ENCODE measurements at regions of chr12 and their contacts with region 1.

Region 1: DNA sequence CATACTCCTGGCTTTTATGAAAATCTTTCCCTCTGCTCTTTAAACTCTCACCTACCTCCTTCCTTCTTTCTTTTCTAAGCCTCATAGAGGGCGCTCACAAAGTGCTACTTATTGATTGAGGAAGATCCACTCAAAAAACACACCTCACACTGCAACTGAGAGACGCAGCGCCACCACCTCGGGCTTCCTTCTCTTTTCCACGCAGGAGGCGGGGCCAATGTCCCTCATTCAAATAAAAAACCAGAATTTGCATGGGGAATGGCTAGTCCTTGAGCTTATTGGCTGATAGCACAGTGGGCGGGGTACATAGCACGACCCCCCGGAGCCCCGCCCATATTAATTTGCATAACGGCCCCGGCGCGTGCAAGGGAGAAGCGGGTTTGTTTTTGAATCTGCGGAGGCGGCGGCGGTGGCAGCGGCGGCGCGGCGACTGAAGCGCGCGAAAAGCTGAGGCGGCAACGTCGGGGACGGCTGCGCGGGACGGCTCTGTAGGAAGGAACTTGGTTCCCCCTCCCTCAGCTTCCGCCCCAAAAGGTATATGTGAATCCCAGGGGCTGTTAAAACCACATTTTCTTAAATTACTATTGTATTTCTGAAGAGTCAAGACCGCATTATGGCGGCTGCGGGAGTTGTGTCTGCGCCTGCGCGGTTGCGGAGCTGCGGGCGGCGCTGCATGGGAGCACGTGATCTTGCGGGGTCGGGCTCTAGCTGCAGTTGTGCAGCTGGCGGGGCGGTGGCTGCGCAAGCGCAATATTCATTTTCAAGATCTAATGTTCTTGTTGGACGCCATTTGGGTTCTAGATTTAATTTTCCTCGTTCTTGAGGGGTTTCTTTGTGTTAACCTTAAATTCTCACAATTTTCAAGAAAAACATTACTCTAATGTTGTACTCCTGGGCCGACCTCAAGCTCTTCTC is at the start of gene ATF7IP:
- DNase-seq: peak; percentile 97
- H3K4me3 Mint-ChIP-seq: peak within 1 kb of the TSS; percentile 81
- H3K27ac Mint-ChIP-seq: peak within 1 kb of the TSS; percentile 100
- H3K4me1 Mint-ChIP-seq: peaks cover 34% of the 10 kb centered on the region
- H3K27me3 Mint-ChIP-seq: no peaks in the 10 kb centered on the region

Region 2: GRCh38 chr12:14257734-14258574 is 107.6 kb before region 1 on chr12:
- CTCF ChIA-PET with region 1: interaction called, 25 read pairs
- DNase-seq: peak; percentile 90
- H3K4me3 Mint-ChIP-seq: peak overlapping the region; percentile 64
- H3K27ac Mint-ChIP-seq: peak overlapping the region; percentile 99
- H3K4me1 Mint-ChIP-seq: peaks cover 51% of the 10 kb centered on the region
- H3K27me3 Mint-ChIP-seq: no peaks in the 10 kb centered on the region

Region 3: DNA sequence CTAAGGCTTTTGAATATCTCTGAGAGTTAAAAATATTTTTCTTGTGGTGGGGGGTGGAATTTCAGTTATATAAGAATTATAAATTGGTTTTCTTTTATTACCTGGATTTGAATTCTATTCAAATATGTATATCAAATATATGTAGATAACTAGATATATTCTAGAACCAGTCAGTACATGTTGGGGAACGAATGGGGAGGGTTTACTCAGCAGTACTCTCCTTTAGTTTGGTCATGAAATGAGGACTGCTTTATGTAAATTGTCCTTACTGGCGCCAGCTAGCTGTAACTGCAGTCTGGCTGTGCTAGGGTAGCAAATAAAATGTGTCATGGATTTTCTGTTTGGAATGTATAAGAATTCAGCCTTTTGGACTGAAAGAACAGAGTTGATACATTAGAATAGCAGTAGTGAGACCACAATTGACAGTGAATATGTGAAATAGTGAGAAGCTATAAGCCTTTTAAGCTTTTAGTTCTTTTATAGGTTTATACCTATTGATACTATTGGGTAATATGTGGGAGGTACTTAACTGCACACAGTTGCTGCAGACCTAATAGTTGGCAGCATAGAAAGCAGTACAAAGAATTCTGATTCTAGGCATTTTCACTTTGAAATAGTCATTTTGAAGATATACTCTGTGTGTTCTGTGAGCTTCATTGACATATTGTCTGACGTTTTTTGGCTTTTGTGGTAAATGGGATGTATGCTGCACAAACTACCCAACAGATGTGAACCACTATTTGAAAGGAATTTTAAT is 28.9 kb after region 1 on chr12:
- CTCF ChIA-PET with region 1: interaction called, 17 read pairs
- DNase-seq: peak; percentile 58
- H3K4me3 Mint-ChIP-seq: peak overlapping the region; percentile 87
- H3K27ac Mint-ChIP-seq: peak overlapping the region; percentile 99
- H3K4me1 Mint-ChIP-seq: peaks cover 82% of the 10 kb centered on the region
- H3K27me3 Mint-ChIP-seq: no peaks in the 10 kb centered on the region

Region 4: GRCh38 chr12:14435627-14436026 is 70.1 kb after region 1 on chr12:
- CTCF ChIA-PET with region 1: no interaction called
- DNase-seq: no peak
- H3K4me3 Mint-ChIP-seq: no peak overlapping the region
- H3K27ac Mint-ChIP-seq: no peak overlapping the region
- H3K4me1 Mint-ChIP-seq: peaks cover 8% of the 10 kb centered on the region
- H3K27me3 Mint-ChIP-seq: no peaks in the 10 kb centered on the region

Measured in activated naive CD4-positive, alpha-beta T cell treated with anti-CD3 and anti-CD28 coated beads, Interleukin-2, amount 10 ng/mL, durations not matched to agents 7 days and 5 days (primary cell).